Transverse colon (tissue), 4 donors: ENCODE measurements at regions of chr2 and their contacts with region 1.

Region 1: GRCh38 chr2:215773728-215774127 is 239.6 kb downstream of the MREG start:
- DNase-seq: no peak
- H3K4me3 ChIP-seq: no peak overlapping the region
- H3K27ac ChIP-seq: peak overlapping the region in 3 of 4 donors; percentile 4 to 70 (median 69)
- H3K4me1 ChIP-seq: peaks cover 0 to 21% (median 11%) of the 10 kb centered on the region in 4 donors
- H3K27me3 ChIP-seq: no peaks in the 10 kb centered on the region
- CTCF ChIP-seq: no peak
- EP300 ChIP-seq: no peak
- POLR2A ChIP-seq: no peak

Region 2: GRCh38 chr2:215728504-215729087 is 45.1 kb before region 1 on chr2:
- in situ Hi-C with region 1: no loop called
- intact Hi-C with region 1: loop called (anchors 10 kb)
- DNase-seq: no peak
- H3K4me3 ChIP-seq: no peak overlapping the region
- H3K27ac ChIP-seq: no peak overlapping the region
- H3K4me1 ChIP-seq: no peaks in the 10 kb centered on the region
- H3K27me3 ChIP-seq: no peaks in the 10 kb centered on the region
- CTCF ChIP-seq: no peak
- EP300 ChIP-seq: no peak
- POLR2A ChIP-seq: no peak

Region 3: GRCh38 chr2:216632952-216633615 is 859.4 kb after region 1 on chr2 and contains the start of gene IGFBP2:
- in situ Hi-C with region 1: no loop called
- intact Hi-C with region 1: no loop called
- DNase-seq: peak; percentile 52
- H3K4me3 ChIP-seq: peak within 1 kb of the TSS; percentile 43 to 65 (median 57)
- H3K27ac ChIP-seq: peak within 1 kb of the TSS; percentile 23 to 78 (median 64)
- H3K4me1 ChIP-seq: peaks cover 0 to 43% (median 33%) of the 10 kb centered on the region in 4 donors
- H3K27me3 ChIP-seq: peaks cover 58% of the 10 kb centered on the region
- CTCF ChIP-seq: no peak
- EP300 ChIP-seq: no peak
- POLR2A ChIP-seq: no peak
- total RNA-seq, gene IGFBP2: 10.5 to 155 (median 101) TPM